Panc1 (cell line): ENCODE measurements at regions of chr12 and their contacts with region 1.

Region 1: DNA sequence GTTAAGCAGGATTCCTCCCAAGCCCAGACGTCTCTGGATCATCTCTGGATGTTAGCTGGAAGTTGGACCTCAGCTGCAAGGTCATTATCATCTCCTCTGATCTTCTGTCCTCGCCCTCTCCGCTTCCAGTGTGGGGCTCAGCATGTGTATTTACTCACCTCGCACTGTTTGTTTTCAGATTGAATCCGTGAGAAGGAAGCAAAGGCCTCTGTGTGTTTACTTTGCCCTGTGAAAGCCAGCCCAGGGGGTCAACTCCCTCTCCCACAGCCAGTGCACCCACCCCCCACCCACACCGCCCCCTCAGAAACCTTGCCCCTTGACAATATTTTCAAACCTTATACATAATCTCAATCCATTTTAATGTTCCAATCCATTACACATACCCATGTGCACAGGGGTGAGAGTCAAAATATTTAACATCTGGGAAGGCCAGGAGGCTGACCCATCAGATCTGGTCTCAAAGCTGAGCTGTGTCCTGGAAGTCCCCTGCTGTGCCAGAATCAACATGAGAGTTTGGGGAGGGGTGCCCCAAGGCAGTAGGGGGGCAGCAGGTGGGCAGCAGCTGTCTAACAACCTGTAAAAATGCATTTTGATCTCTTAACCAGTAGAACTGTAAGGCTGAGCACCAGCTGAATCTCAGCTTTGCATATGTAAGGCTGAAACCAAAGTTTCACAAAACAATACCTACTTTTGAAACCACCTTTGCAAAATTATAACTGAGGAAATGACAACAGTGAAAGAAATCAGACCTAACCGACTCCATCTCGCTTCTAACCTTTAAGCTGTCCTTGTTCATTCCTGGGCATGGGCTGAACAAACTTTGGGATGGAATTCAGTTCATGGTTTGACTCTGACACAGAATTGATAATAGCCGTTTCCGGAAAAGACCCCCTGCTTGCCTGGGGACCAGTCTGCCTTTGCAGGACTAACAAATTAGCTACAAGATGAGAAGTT is 158.0 kb downstream of the ZNF664 start:
- DNase-seq: no peak
- ATAC-seq: peak; percentile 86
- H3K4me3 ChIP-seq: no peak overlapping the region
- H3K27ac ChIP-seq: peak overlapping the region; percentile 52
- H3K4me1 ChIP-seq: peaks cover 14% of the 10 kb centered on the region
- H3K27me3 ChIP-seq: no peaks in the 10 kb centered on the region
- CTCF ChIP-seq: no peak

Region 2: GRCh38 chr12:122659519-122659918 is 1471.5 kb before region 1 on chr12:
- CTCF ChIA-PET with region 1: no interaction called
- POLR2A ChIA-PET with region 1: interaction called, 11 read pairs
- in situ Hi-C with region 1: no loop called
- intact Hi-C with region 1: no loop called
- DNase-seq: no peak
- ATAC-seq: no peak
- H3K4me3 ChIP-seq: no peak overlapping the region
- H3K27ac ChIP-seq: no peak overlapping the region
- H3K4me1 ChIP-seq: no peaks in the 10 kb centered on the region; the same call in 1 of the 2 replicates
- H3K27me3 ChIP-seq: no peaks in the 10 kb centered on the region
- CTCF ChIP-seq: no peak